Activated CD4-positive, alpha-beta T cell treated with anti-CD3 and anti-CD28 coated beads, Interleukin-2, amount 10 ng/mL, durations not matched to agents 24 days and 14 days (primary cell): ENCODE measurements at regions of chr11 and their contacts with region 1.

Region 1: DNA sequence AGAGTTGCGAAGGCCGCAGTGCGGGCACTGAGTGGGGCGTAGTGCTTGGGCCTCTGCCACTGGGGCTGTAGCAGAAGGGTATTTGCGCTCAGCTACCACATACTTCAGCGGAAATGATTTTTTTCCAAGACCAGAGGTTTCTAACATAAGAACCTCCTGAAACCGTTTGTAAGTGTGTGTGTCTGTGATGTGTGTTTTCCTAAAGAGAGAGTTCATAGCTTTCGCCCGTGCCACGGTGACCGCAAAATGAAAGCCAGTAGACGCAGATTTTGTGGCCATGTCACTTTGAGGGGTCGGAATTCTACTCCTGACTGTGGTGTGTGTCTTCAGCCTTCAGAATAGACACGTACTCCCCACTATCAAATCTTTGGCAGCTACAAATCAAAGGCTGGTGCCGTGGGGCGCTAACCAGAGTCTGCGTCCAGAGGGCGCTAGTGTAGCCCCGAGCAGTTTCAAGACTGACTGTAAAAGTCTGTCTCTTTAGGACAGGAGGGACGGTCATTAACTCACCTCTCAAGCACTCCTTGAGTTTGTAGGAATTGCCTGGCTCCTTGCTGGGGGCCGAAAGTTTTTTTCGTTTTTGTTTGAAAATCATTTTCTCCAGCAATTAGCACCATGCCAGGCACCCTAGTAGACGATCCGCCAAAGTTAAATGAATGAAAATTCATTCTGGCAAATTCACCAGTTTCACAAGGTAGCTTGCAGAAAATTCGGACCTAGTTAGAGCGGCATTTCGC is 2.5 kb upstream of the CALCA start:
- DNase-seq: peak; percentile 89
- H3K4me3 Mint-ChIP-seq: peak overlapping the region; percentile 72
- H3K27ac Mint-ChIP-seq: no peak overlapping the region
- H3K4me1 Mint-ChIP-seq: peaks cover 29% of the 10 kb centered on the region
- H3K27me3 Mint-ChIP-seq: peaks cover 83% of the 10 kb centered on the region

Region 2: GRCh38 chr11:14852571-14853177 is 122.0 kb before region 1 on chr11:
- intact Hi-C with region 1: no loop called
- DNase-seq: no peak
- H3K4me3 Mint-ChIP-seq: no peak overlapping the region
- H3K27ac Mint-ChIP-seq: peak overlapping the region; percentile 2
- H3K4me1 Mint-ChIP-seq: peaks cover 12% of the 10 kb centered on the region
- H3K27me3 Mint-ChIP-seq: no peaks in the 10 kb centered on the region

Region 3: GRCh38 chr11:15006139-15006759 is 31.6 kb after region 1 on chr11:
- intact Hi-C with region 1: loop called (anchors 2 kb)
- DNase-seq: peak; percentile 67
- H3K4me3 Mint-ChIP-seq: no peak overlapping the region
- H3K27ac Mint-ChIP-seq: no peak overlapping the region
- H3K4me1 Mint-ChIP-seq: no peaks in the 10 kb centered on the region
- H3K27me3 Mint-ChIP-seq: peaks cover 48% of the 10 kb centered on the region

Region 4: GRCh38 chr11:15074206-15075161 is 99.8 kb after region 1 on chr11:
- intact Hi-C with region 1: loop called (anchors 1 kb)
- DNase-seq: peak; percentile 95
- H3K4me3 Mint-ChIP-seq: peak overlapping the region; percentile 84
- H3K27ac Mint-ChIP-seq: peak overlapping the region; percentile 59
- H3K4me1 Mint-ChIP-seq: peaks cover 16% of the 10 kb centered on the region
- H3K27me3 Mint-ChIP-seq: peaks cover 37% of the 10 kb centered on the region

Region 5: DNA sequence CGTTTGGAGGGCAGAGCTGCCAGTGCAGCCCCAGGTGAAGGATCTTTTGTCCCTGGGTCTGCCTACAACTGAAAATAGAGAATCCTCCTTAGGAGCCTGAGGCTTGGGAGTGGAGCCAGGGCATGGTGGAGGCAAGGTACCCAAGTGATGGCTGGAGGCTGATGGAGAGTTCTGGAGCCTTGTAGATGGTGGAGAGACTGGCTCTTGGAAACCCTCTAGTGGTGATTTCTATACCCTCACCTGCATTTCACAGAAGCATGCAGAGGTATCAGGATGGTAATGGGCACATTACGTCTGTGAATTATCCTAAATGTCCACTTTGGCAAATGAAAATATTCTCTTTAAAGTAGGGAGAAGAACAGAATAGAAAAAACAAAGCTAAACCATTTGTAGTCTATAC is 184.4 kb after region 1 on chr11:
- intact Hi-C with region 1: no loop called
- DNase-seq: peak; percentile 61
- H3K4me3 Mint-ChIP-seq: no peak overlapping the region
- H3K27ac Mint-ChIP-seq: no peak overlapping the region
- H3K4me1 Mint-ChIP-seq: no peaks in the 10 kb centered on the region
- H3K27me3 Mint-ChIP-seq: peaks cover 21% of the 10 kb centered on the region

Region 6: GRCh38 chr11:15208378-15209222 is 233.9 kb after region 1 on chr11:
- intact Hi-C with region 1: loop called (anchors 5 kb)
- DNase-seq: peak; percentile 93
- H3K4me3 Mint-ChIP-seq: no peak overlapping the region
- H3K27ac Mint-ChIP-seq: no peak overlapping the region
- H3K4me1 Mint-ChIP-seq: no peaks in the 10 kb centered on the region
- H3K27me3 Mint-ChIP-seq: peaks cover 11% of the 10 kb centered on the region

Region 7: DNA sequence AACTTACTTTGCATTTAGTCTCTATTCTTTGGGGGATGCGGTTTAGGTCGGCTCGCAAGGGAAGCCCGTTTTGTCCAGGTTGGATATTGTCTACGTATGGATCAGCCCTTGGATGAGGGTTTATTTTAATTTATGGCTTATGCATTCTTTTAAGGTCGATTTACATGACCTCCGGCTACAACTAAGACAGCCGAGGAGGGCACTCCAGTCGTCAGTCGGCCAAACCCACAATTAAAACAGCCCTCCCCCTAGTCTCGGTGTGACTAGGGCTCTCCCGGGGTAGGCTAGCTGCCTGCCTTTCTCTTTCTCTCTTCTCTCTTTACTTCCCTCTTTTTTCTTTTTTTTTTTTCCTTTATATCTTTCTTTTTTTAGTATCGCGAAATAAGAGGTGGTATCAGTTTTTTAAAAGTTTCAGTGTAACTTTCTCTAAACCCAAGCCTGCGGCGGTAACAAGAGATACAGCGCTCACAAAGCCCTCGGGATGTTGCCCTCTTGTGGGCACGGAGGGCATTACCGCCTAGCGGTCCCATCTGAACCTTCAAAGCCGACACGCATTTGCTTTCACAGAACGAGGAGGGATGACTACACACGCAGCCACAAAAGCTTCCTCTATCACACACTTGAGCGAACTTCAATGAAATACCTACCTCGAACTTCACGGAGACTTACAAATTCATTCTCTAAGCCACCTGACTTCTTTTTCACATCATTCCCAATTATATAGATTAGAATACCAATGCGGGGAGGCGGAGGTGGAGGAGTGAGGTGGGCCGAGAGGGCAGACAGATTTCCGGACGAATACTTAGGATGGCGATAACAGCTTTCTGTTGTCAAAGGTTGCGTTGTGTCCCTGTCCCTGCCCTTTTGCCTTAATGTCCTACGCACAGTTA is 1631.5 kb after region 1 on chr11:
- intact Hi-C with region 1: loop called (anchors 5 kb)
- DNase-seq: peak; percentile 95
- H3K4me3 Mint-ChIP-seq: peak overlapping the region; percentile 74
- H3K27ac Mint-ChIP-seq: peak overlapping the region; percentile 67
- H3K4me1 Mint-ChIP-seq: peaks cover 12% of the 10 kb centered on the region
- H3K27me3 Mint-ChIP-seq: peaks cover 49% of the 10 kb centered on the region